CD8-positive, alpha-beta T cell (primary cell): ENCODE measurements at regions of chr11 and their contacts with region 1.

Region 1: GRCh38 chr11:10735481-10736475 is 15.3 kb upstream of the CTR9 start:
- DNase-seq: peak; percentile 73 to 91 (median 85)
- ATAC-seq: peak; percentile 99
- H3K4me3 ChIP-seq: peak overlapping the region; percentile 3 to 20
- H3K4me3 Mint-ChIP-seq: peak overlapping the region; percentile 56
- H3K27ac ChIP-seq: no peak overlapping the region
- H3K27ac Mint-ChIP-seq: no peak overlapping the region
- H3K4me1 ChIP-seq: peaks cover 9% of the 10 kb centered on the region
- H3K4me1 Mint-ChIP-seq: peaks cover 13% of the 10 kb centered on the region
- H3K27me3 ChIP-seq: no peaks in the 10 kb centered on the region
- H3K27me3 Mint-ChIP-seq: no peaks in the 10 kb centered on the region
- CTCF ChIP-seq: peak; percentile 96

Region 2: DNA sequence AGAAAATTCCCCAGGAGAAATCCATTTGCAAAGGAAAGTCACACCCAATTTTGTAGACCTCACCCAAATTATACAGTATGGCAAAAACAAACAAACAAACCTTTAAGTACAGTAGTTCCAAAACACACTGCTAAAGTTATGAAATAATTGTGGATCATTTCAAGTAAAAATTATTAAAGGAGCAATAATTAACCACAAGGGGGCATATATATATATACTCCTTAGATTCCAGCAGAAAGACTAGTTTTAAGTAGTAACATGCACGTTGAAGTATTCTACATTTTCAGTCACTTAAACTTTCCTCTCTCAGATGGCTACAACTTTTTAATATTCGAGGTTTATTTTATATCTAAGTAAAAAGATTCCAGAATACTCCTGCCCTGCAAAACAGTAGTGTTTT is 221.6 kb before region 1 on chr11:
- CTCF ChIA-PET with region 1: no interaction called
- POLR2A ChIA-PET with region 1: no interaction called
- intact Hi-C with region 1: loop called (anchors 10 kb)
- DNase-seq: no peak
- ATAC-seq: no peak
- H3K4me3 ChIP-seq: no peak overlapping the region
- H3K4me3 Mint-ChIP-seq: no peak overlapping the region
- H3K27ac ChIP-seq: no peak overlapping the region
- H3K27ac Mint-ChIP-seq: no peak overlapping the region
- H3K4me1 ChIP-seq: no peaks in the 10 kb centered on the region
- H3K4me1 Mint-ChIP-seq: peaks cover 5% of the 10 kb centered on the region
- H3K27me3 ChIP-seq: no peaks in the 10 kb centered on the region
- H3K27me3 Mint-ChIP-seq: no peaks in the 10 kb centered on the region
- CTCF ChIP-seq: no peak